ENCODE measurements at regions of chr3 and their contacts with region 1.

Region 1: DNA sequence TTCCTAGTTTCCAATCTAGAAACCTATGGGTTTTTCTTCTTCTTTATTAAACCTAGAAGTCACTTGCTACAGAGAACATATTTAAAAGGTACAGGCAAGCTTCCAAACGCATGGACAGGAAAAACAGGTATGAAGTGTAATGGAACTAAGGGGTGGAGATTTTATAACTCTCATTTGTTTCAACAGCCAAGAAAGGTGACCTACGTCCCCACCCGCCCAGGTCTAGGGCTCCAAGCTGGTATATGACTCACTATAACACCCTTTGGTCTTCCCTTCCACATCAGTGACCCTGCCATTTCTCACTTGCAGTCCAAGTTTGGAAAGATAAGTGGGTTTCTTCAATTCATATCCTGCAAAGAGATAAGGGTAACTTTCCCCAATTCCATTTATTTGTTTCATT is 6.0 kb upstream of the LIPH start:
- DNase-seq: no peak
- ATAC-seq: no peak
- H3K4me3 Mint-ChIP-seq: no peak overlapping the region
- H3K27ac Mint-ChIP-seq: peak overlapping the region; percentile 54
- H3K4me1 Mint-ChIP-seq: peaks cover 37% of the 10 kb centered on the region
- H3K27me3 Mint-ChIP-seq: peaks cover 16% of the 10 kb centered on the region; the same call in 1 of the 2 replicates
- CTCF ChIP-seq: no peak

Region 2: GRCh38 chr3:185460719-185461350 is 97.6 kb before region 1 on chr3:
- CTCF ChIA-PET with region 1: interaction called, 17 read pairs
- POLR2A ChIA-PET with region 1: no interaction called
- DNase-seq: no peak
- ATAC-seq: peak; percentile 30; the same call in 1 of the 2 replicates
- H3K4me3 Mint-ChIP-seq: no peak overlapping the region
- H3K27ac Mint-ChIP-seq: no peak overlapping the region
- H3K4me1 Mint-ChIP-seq: no peaks in the 10 kb centered on the region
- H3K27me3 Mint-ChIP-seq: no peaks in the 10 kb centered on the region
- CTCF ChIP-seq: no peak

Region 3: DNA sequence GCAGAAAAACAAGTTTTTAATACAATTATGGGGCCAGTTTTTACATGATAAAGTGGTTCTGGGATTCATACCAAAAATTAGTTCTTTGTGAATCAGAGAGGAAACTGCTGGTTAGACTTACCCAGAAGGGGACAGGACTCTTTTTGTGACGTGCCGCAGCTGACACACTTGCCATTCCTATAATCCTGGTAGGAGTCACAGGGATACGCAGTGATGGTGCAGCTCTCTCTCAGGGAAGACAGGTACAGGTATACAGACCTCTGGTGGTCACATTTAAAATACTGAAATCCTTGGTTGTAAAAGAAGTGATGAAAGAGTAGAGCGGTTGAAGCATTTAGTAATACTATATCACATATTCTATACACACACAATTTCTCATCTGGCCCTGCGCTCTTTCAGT is 39.4 kb before region 1 on chr3:
- CTCF ChIA-PET with region 1: interaction called, 10 read pairs
- POLR2A ChIA-PET with region 1: no interaction called
- DNase-seq: no peak
- ATAC-seq: peak; percentile 78
- H3K4me3 Mint-ChIP-seq: no peak overlapping the region
- H3K27ac Mint-ChIP-seq: no peak overlapping the region
- H3K4me1 Mint-ChIP-seq: no peaks in the 10 kb centered on the region
- H3K27me3 Mint-ChIP-seq: peaks cover 9% of the 10 kb centered on the region
- CTCF ChIP-seq: no peak

Region 4: DNA sequence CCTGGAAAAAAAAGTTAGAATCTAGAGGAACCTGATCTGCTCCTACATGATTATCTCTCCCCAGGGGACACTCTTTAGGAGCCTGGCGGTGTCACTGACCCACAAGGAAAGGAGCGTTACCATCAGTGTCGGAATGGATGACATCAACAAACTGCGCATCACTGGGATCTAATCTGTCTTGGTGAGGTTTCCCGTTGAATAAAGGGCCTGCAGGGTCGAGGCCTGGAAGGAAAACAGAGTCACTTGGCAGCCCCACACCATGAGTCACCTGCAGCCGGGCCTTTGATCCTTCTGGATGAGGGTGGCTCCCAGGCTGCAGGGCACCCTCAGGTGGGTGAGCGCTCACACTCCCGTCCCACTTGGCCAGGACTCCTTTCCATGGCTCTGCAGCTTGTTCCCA is 31.0 kb before region 1 on chr3:
- CTCF ChIA-PET with region 1: interaction called, 13 read pairs
- POLR2A ChIA-PET with region 1: no interaction called
- DNase-seq: no peak
- ATAC-seq: no peak
- H3K4me3 Mint-ChIP-seq: no peak overlapping the region
- H3K27ac Mint-ChIP-seq: no peak overlapping the region
- H3K4me1 Mint-ChIP-seq: no peaks in the 10 kb centered on the region
- H3K27me3 Mint-ChIP-seq: peaks cover 2% of the 10 kb centered on the region; the same call in 1 of the 2 replicates
- CTCF ChIP-seq: no peak

Region 5: DNA sequence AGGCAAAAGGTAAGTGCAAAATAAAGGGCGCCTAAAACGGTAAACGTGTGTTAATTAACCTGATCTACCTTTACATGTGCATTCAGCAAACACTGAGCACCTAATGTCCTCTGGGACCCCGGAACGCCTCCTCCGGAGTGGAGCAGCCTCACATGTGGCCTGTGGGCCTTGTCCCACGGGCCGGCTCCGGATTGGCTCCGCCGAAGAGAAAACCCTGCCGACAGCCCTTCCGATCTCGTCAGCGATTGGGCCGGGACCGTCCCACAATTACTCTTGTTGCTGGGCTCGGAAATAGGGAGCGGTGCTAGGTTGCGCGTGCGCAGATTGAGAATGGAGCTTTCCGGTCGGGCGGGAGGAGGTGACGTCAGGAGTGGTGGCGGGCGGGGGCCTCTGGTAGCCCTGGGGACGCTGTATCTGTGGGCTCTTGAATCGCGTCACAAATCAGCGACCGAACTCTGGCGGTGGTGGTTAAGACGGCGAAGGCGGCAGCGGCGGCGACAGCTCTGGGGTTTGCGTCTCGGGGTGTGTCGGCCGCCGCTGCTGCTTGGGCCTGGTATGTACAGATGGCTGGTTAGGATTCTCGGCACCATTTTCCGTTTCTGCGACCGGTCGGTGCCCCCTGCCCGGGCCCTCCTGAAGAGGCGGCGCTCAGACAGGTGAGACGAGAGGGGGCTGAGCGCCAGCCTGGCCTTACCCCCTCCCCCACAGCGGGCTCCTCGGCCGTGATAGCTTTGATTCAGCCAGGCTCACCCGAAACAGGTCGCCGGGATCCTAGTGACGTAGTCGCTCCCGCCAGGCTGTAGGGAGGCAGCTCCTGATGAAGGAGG is 27.7 kb after region 1 on chr3 and contains the start of gene SENP2:
- CTCF ChIA-PET with region 1: interaction called, 20 read pairs
- POLR2A ChIA-PET with region 1: no interaction called
- DNase-seq: peak; percentile 99
- ATAC-seq: peak; percentile 87
- H3K4me3 Mint-ChIP-seq: peak within 1 kb of the TSS; percentile 89
- H3K27ac Mint-ChIP-seq: peak within 1 kb of the TSS; percentile 99
- H3K4me1 Mint-ChIP-seq: peaks cover 37% of the 10 kb centered on the region
- H3K27me3 Mint-ChIP-seq: no peaks in the 10 kb centered on the region; the same call in 1 of the 2 replicates
- CTCF ChIP-seq: no peak
- total RNA-seq, gene SENP2: 55.0 to 57.2 TPM (median 56.9 TPM) in 3 replicates